Activated B cell treated with CpG ODN at 0.5 μM for 24 hours (primary cell): ENCODE measurements at regions of chr19 and their contacts with region 1.

Region 1: DNA sequence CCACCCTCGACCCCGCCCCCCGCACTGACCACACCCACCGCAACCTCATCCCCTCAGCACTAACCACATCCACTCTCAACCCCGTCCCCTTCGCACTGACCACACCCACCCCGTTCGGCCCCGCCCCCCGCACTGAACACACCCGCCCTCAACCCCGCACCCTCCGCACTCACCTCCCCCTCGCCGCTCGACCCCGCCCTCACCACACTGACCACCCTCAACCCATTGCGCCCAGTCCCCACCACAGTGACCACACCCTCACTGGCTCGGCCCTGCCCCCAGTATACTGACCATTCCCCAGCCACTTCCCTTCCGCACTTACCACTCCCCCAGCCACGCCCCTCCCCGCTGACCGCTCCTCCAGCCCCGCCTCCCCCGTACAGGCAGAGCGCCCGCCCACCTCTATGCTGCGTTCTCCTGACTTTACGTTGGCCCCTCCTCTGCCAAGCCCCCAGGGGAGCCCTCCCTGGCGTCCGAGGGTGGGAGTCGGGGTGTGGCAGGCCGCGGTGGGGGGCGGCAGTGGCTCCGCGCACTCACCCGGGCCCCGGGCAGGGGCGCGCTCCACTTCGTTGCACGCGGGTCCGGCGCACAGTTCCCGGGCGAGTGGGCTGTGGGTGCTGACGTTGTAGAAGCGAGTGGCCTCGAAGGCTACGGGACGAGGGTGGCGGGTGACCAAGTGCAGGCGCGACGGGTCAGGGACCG is 8.5 kb downstream of the F2RL3 start:
- DNase-seq: peak; percentile 67
- ATAC-seq: peak; percentile 74
- H3K4me3 Mint-ChIP-seq: peak overlapping the region; percentile 81
- H3K27ac Mint-ChIP-seq: peak overlapping the region; percentile 24
- H3K4me1 Mint-ChIP-seq: peaks cover 46% of the 10 kb centered on the region
- H3K27me3 Mint-ChIP-seq: no peaks in the 10 kb centered on the region
- CTCF ChIP-seq: no peak

Region 2: DNA sequence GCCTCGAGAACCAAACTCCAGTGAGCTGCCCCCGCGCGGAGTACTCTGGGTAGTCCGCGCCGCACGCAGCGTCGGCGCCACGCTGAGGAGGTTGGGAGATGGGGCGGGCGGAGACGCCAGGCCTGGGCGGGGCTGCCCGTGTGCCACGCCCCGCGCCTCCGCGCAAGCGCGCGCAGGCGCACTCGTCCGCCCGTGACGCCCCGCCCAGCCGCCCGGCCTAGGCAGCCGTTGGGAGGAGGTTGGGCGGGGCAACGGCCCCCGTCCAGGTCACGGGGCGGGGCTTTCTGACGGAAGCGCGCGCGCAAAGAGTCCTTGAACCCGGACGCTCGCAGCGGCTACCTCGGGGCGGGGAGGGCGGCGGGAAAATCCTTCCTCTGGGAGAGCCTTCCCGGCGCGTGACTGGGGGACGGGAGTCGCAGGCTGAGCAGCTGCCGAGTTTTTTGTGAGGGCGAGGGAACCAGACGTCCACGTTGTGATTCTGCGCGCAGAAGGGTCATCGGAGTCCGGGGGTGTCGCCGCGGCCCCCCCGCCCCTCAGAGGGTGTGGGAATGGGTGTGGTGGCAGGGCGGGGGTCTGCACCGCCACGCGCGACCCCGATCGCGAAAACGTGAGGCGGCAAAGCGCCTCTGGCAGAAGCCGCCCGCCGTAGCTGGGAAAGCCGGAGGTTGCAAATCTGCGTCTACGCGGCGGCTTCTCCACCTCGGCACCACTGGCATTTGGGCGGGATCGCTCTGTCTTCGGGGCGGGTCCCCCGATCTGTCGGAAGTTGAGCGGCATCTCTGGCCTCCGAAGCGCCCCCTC is 268.9 kb before region 1 on chr19 and contains the start of gene MED26:
- CTCF ChIA-PET with region 1: no interaction called
- POLR2A ChIA-PET with region 1: no interaction called
- intact Hi-C with region 1: loop called (anchors 10 kb)
- DNase-seq: peak; percentile 93
- ATAC-seq: peak; percentile 94
- H3K4me3 Mint-ChIP-seq: peak within 1 kb of the TSS; percentile 98
- H3K27ac Mint-ChIP-seq: peak within 1 kb of the TSS; percentile 94
- H3K4me1 Mint-ChIP-seq: peaks cover 51% of the 10 kb centered on the region
- H3K27me3 Mint-ChIP-seq: no peaks in the 10 kb centered on the region
- CTCF ChIP-seq: no peak
- total RNA-seq, gene MED26: 32.0 and 36.1 TPM in 2 replicates

Region 3: GRCh38 chr19:16714702-16715287 is 182.5 kb before region 1 on chr19:
- CTCF ChIA-PET with region 1: interaction called, 4 read pairs
- POLR2A ChIA-PET with region 1: no interaction called
- intact Hi-C with region 1: loop called (anchors 2 kb)
- DNase-seq: peak; percentile 47
- ATAC-seq: peak; percentile 20
- H3K4me3 Mint-ChIP-seq: peak overlapping the region; percentile 42
- H3K27ac Mint-ChIP-seq: peak overlapping the region; percentile 81
- H3K4me1 Mint-ChIP-seq: peaks cover 54% of the 10 kb centered on the region
- H3K27me3 Mint-ChIP-seq: no peaks in the 10 kb centered on the region
- CTCF ChIP-seq: peak; percentile 94

Region 4: GRCh38 chr19:16778796-16779411 is 118.4 kb before region 1 on chr19:
- CTCF ChIA-PET with region 1: no interaction called
- POLR2A ChIA-PET with region 1: no interaction called
- intact Hi-C with region 1: loop called (anchors 2 kb)
- DNase-seq: no peak
- ATAC-seq: peak; percentile 61
- H3K4me3 Mint-ChIP-seq: no peak overlapping the region
- H3K27ac Mint-ChIP-seq: no peak overlapping the region
- H3K4me1 Mint-ChIP-seq: no peaks in the 10 kb centered on the region
- H3K27me3 Mint-ChIP-seq: no peaks in the 10 kb centered on the region
- CTCF ChIP-seq: no peak

Region 5: DNA sequence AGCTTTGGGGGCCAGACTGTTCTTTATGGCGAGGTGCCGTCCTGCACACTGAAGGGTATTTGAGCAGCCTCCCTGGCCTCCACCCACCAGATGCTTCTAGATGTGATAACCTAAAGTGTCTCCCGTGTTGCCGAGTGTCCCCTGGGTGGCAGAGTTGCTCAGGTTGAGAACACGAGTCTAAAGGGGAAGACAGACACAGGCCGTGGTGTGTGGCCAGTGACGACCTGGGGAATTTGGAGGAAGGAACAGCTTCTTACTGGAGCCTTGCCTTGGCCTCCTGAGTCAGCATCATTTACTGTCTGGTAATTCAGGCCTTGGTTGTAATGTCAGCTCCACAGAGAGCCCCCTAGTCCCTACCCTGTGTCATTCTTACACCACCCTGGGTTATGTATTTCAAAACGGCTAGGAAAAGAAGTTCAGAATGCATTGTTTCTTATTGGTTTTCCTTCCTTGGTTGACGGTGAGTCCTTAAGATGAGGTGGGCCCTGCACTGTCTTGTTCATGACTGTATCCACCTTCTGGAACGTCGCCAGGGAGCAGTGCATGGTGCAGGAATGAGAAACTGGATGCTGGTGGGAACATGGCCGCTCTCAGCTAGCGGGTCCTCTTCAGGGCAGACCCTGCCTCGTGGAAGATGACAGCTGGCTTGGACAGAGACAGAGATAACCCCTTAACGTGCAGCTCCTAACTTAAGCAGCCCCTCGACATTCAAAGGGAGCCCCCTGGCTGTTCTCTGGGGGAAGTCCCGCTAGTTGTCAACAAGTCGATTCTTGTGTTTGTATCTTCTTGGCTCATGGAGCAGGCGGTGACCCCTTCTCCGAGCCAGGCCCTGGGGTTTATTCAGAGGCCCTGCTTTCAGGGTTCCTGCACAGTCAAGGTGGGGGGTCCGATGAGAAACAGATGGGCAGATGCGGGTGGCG is 60.9 kb before region 1 on chr19:
- CTCF ChIA-PET with region 1: interaction called, 3 read pairs
- POLR2A ChIA-PET with region 1: interaction called, 4 read pairs
- intact Hi-C with region 1: loop called (anchors 1 kb)
- DNase-seq: peak; percentile 29
- ATAC-seq: peak; percentile 81
- H3K4me3 Mint-ChIP-seq: no peak overlapping the region
- H3K27ac Mint-ChIP-seq: peak overlapping the region; percentile 80
- H3K4me1 Mint-ChIP-seq: peaks cover 42% of the 10 kb centered on the region
- H3K27me3 Mint-ChIP-seq: no peaks in the 10 kb centered on the region
- CTCF ChIP-seq: no peak